ENCODE measurements at regions of chr1 and their contacts with region 1.

Region 1: DNA sequence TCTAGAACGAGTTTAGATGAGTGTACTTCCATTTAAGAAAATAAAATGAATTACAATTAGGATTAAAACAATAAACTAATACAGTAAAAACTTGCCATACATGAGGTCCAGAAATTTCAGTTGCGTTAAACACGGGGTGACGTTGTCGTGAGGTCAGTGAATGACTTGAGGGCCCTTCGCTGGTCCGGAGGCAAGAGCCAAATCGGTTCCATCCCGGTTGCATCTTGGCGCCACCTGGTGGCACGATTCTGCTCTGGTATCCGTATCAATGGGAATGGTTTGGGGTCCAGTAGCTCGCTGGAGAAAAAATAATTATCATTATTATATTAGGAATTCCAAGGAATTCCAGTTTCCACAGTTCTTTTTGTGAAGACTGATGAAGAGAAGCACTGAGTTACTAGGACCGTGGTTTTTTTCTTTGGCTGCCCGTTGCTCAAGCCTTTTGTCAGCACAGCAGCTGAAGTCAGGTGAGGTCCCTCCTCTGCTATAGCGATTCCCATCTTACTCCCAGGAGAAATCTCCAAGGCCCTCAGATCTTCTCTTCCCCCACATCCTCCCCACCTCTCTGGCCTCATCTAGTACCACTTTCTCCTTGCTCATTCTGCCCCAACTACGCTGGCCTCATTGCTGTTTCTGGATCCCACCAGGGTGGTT is 161.4 kb downstream of the SLC35F3 start:
- DNase-seq: peak; percentile 62
- CTCF ChIP-seq: peak; percentile 84

Region 2: GRCh38 chr1:233394860-233395717 is 670.8 kb before region 1 on chr1:
- in situ Hi-C with region 1: loop called (anchors 25 kb)
- DNase-seq: peak; percentile 46
- CTCF ChIP-seq: peak; percentile 72